Dendritic cell treated with granulocyte-macrophage colony-stimulating factor and Interleukin-4, amounts not matched to agents 40 ng/mL and 50 ng/mL, for 4 days (primary cell): ENCODE measurements at regions of chr7 and their contacts with region 1.

Region 1: GRCh38 chr7:114026486-114027089 is 107.8 kb upstream of the PPP1R3A start:
- H3K4me3 Mint-ChIP-seq: no peak overlapping the region
- H3K27ac Mint-ChIP-seq: no peak overlapping the region
- H3K4me1 Mint-ChIP-seq: no peaks in the 10 kb centered on the region
- H3K27me3 Mint-ChIP-seq: no peaks in the 10 kb centered on the region

Region 2: DNA sequence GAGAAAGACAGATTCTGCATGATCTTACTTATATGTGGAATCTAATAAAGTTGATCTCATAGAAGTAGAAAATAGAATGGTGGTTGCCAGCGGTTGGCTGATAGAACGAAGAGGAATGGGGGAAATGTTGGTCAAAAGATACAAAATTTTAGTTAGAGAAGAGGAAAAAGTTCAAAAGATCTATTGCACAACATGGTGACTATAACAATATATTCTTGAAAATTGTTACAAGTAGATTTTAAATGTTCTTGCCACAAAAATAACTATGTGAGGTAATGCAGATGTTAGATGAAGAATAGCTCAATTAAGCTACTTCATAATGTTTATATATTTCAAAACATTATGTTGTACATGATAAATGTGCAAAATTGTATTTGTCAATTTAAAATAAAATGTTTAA is 795.9 kb before region 1 on chr7:
- intact Hi-C with region 1: no loop called
- H3K4me3 Mint-ChIP-seq: no peak overlapping the region
- H3K27ac Mint-ChIP-seq: no peak overlapping the region
- H3K4me1 Mint-ChIP-seq: no peaks in the 10 kb centered on the region
- H3K27me3 Mint-ChIP-seq: no peaks in the 10 kb centered on the region

Region 3: DNA sequence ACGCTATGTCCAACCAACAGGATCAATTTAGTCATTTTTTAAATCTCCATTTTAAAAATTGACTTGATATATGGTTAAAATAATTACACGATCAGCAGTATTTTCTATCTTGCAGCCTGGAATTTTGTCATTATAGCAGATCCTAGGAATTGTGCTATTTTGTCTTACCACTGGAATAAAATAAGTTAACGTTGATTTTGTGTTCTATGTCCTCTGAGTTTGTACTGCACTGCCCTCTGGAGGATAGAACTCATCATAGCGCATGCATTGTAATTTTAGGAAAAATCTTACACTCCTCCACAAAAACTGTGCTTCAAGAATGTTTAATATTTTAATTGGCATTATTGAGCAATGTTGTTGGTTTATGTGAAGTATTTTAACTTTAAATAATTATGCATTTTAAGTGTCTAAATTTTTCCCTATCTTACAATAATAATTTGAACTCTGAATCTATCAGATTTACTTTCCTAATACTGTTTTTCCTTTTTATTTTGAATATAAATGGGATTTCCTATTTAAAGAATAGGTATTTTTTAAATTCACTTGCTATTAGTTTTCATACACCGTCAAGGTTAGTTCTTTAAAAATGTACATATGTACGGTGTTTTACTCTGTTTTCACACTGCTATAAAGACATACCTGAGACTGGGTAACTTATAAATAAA is 327.9 kb before region 1 on chr7:
- intact Hi-C with region 1: no loop called
- H3K4me3 Mint-ChIP-seq: no peak overlapping the region
- H3K27ac Mint-ChIP-seq: no peak overlapping the region
- H3K4me1 Mint-ChIP-seq: no peaks in the 10 kb centered on the region
- H3K27me3 Mint-ChIP-seq: no peaks in the 10 kb centered on the region

Region 4: DNA sequence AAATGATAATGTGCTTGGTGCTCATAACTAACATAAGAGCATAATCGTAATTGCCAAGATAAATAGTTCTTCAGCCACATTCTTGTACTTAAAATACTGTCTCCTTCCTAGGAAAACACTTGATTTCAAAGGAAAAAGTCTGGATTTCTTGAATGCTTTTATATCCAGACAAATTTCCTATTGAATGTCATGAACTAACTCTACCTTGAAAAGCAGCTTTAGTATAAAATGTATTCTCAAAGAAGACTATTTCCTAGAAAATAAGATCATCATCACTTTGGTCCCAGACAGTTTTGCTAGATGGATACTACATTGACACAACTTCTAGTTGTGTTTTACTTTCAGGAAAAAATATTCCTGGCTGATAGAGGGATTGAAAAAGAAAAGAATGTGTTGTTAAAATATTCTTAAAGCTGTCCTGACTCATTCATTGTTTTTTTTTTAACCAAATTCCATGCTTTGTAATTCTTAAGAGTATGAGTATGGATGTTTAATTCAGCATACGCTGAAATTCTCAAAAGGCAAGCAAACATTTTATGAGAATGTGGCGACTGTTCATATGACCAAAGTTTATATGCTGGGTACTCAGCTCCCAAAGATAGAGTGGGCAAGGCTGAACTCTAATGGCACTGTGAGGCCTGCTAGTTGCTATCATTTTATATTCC is 213.9 kb before region 1 on chr7:
- intact Hi-C with region 1: no loop called
- H3K4me3 Mint-ChIP-seq: no peak overlapping the region
- H3K27ac Mint-ChIP-seq: no peak overlapping the region
- H3K4me1 Mint-ChIP-seq: no peaks in the 10 kb centered on the region
- H3K27me3 Mint-ChIP-seq: no peaks in the 10 kb centered on the region

Region 5: DNA sequence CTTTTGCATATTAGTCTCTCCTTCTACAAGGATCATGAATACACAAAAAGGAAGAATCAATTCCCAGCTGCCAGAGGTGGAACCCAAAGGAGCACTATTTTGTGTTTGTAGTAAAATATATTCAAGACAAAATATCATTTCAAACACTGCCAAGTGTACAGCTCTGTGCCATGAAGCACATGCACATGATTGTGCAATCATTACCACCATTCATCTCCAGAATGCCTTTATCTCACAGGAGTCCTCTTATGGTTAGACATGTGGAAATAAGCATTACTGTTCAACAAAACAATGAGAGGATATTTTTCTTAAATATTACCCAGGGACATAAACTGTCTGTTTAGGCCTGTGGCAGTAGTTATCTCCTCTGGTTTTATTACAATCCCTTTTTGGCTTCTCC is 43.7 kb after region 1 on chr7:
- intact Hi-C with region 1: loop called (anchors 10 kb)
- H3K4me3 Mint-ChIP-seq: no peak overlapping the region
- H3K27ac Mint-ChIP-seq: no peak overlapping the region
- H3K4me1 Mint-ChIP-seq: no peaks in the 10 kb centered on the region
- H3K27me3 Mint-ChIP-seq: peaks cover 3% of the 10 kb centered on the region

Region 6: DNA sequence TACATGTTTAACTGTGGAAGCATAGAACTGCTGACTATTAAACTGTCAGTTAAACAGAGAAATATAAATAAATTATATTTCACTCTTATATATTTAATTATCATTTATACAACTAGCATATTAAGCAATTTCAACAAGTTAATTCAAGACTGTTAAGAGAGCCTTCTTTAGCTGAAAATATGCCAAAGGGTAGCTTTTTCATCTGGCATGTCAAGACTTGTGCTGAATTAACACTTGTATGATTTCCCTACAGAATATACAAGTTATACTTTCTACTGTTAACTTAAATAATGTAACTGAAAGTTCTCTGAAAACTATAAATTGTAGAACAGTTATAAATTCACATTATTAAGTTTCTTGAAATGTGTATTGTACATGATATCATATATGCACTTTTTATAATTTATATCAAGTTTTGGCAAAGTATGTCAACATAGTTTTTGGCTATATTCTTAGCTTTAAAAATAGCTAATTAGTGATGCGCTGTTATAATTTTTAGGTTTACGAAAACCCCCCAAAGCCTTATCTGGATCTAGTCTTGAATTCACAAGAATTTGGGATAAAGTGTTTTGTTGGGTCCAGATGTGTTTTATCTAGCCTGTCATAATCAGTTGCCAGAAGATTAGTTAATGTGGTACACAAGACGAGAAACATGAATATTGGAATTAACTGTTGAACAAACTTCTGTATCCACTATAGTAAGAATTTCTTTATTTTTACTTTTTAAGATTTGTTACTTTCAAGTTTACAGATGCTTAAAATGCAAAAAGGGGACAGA is 156.9 kb after region 1 on chr7:
- intact Hi-C with region 1: no loop called
- H3K4me3 Mint-ChIP-seq: no peak overlapping the region
- H3K27ac Mint-ChIP-seq: no peak overlapping the region
- H3K4me1 Mint-ChIP-seq: no peaks in the 10 kb centered on the region
- H3K27me3 Mint-ChIP-seq: no peaks in the 10 kb centered on the region

Region 7: DNA sequence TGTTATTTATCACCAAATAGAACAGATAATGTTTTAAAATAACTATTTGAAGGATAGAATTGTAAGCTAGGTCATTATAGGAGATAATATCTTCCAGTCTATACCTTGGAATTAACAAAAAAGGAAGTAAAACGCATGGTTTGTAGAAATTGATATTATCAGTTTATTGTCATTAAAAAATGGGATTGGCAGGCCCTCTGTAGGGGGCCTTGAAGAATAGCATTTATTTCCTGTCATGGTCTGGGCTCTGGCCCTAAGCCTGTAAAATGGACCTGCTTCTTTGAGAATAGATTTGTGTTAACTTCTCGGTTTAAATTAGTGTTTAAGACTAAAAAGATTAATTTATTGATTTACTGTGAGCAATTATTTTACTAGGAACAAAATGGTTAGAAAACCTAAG is 190.4 kb after region 1 on chr7:
- intact Hi-C with region 1: loop called (anchors 10 kb)
- H3K4me3 Mint-ChIP-seq: no peak overlapping the region
- H3K27ac Mint-ChIP-seq: no peak overlapping the region
- H3K4me1 Mint-ChIP-seq: peaks cover 3% of the 10 kb centered on the region
- H3K27me3 Mint-ChIP-seq: no peaks in the 10 kb centered on the region

Region 8: GRCh38 chr7:114402866-114403635 is 376.5 kb after region 1 on chr7:
- intact Hi-C with region 1: loop called (anchors 5 kb)
- H3K4me3 Mint-ChIP-seq: no peak overlapping the region
- H3K27ac Mint-ChIP-seq: no peak overlapping the region
- H3K4me1 Mint-ChIP-seq: no peaks in the 10 kb centered on the region
- H3K27me3 Mint-ChIP-seq: no peaks in the 10 kb centered on the region

Region 9: DNA sequence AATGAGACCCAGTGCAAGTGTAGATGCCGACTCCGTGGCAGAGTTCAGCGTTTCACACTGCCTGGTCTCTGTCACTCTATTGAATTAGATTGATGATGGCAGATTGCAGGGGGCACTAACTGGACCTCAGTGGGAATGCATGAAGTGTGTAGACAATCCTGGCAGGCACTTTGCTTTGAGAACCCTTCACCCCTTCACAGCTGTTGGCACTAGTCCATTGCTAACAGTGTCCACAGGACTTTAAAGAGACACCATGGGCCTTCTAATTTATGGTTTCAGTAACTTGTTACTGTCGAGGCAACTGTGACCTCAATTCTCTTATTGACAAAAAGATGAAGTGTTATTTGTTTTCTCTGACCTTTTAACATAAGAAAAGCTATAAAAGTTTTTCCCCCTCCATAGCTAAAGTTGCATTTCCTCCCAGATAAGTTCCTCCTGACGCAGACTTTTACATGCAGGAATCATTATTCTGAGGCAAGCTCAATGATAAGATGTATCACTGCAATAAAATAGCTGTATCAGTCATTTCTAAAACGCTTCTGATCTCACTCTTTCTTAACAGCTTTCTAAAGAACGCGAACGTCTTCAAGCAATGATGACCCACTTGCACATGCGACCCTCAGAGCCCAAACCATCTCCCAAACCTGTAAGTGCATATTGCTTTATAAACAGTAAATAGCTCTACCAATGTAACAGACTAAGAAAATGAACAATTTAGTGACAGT is 626.9 kb after region 1 on chr7:
- intact Hi-C with region 1: loop called (anchors 10 kb)
- H3K4me3 Mint-ChIP-seq: no peak overlapping the region
- H3K27ac Mint-ChIP-seq: no peak overlapping the region
- H3K4me1 Mint-ChIP-seq: no peaks in the 10 kb centered on the region
- H3K27me3 Mint-ChIP-seq: no peaks in the 10 kb centered on the region